Dendritic cell treated with granulocyte-macrophage colony-stimulating factor and Interleukin-4, amounts not matched to agents 40 ng/mL and 50 ng/mL, for 4 days (primary cell): ENCODE measurements at regions of chr21 and their contacts with region 1.

Region 1: GRCh38 chr21:17387030-17387617 is 125.7 kb upstream of the CXADR start:
- H3K4me3 Mint-ChIP-seq: no peak overlapping the region
- H3K27ac Mint-ChIP-seq: no peak overlapping the region
- H3K4me1 Mint-ChIP-seq: peaks cover 8% of the 10 kb centered on the region
- H3K27me3 Mint-ChIP-seq: peaks cover 3% of the 10 kb centered on the region

Region 2: GRCh38 chr21:17527240-17527639 is 140.1 kb after region 1 on chr21:
- intact Hi-C with region 1: no loop called
- H3K4me3 Mint-ChIP-seq: no peak overlapping the region
- H3K27ac Mint-ChIP-seq: no peak overlapping the region
- H3K4me1 Mint-ChIP-seq: no peaks in the 10 kb centered on the region
- H3K27me3 Mint-ChIP-seq: peaks cover 70% of the 10 kb centered on the region

Region 3: DNA sequence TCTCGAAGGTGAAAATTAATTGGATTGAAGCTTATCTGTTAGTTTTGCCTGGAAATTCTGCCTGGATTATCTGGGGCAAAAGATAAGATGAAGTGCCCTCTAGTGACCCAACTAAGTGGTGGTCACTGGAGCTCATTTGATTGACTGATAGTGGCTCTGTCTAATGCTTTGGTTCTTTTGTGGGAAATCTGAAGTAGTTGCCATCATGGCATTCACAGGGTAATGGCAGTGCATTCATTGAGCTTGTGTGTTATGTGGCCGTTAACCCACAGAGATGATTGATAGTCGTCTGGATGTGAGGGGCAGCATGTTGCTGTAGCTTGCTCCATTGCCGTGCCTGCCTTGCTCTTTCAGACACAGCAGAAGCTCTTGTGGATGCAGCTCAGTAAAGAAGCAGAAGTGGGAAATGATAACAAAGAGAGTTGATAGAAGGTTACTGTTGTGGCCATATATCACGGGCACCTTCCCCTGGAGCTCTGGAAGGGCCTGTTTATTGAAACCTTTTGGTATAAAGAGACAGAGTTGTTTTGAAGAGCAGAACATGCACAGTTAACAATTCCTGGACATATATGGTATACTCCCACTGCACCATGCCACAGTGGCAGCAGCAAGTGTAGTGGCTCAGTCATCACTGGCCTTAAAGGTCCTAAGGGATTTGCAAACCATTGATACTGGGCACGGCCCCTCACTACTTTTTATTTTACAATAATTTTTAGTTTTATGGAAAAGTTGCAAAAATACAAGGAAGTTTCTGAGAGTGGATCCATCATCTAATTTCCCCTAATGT is 167.7 kb after region 1 on chr21:
- intact Hi-C with region 1: loop called (anchors 10 kb)
- H3K4me3 Mint-ChIP-seq: no peak overlapping the region
- H3K27ac Mint-ChIP-seq: no peak overlapping the region
- H3K4me1 Mint-ChIP-seq: no peaks in the 10 kb centered on the region
- H3K27me3 Mint-ChIP-seq: peaks cover 52% of the 10 kb centered on the region

Region 4: DNA sequence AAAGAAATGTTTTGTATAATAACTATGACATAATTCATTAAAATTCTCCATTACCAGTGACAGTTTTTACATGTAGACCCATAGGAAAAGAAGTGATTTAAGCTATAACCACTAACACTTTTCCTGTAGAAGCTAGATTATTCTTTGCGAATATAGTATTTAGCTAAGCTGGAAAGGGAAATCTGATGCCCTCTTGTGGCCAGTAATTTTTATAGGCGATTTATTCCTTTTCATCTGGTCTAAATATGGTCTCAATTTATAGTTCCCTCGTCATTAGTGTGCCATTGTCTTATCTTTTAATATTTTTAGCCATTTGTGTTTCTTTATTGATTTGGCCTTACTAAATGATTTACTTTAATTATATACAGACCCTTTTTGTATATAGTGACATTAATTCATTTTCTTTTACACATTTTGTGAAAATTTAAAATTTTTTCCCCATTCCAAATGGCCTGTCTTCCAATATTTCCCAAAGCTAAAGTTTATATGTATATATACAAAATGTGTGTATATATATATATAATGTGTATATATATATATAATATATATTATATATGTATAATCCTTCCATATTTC is 198.8 kb after region 1 on chr21:
- intact Hi-C with region 1: loop called (anchors 1 kb)
- H3K4me3 Mint-ChIP-seq: no peak overlapping the region
- H3K27ac Mint-ChIP-seq: no peak overlapping the region
- H3K4me1 Mint-ChIP-seq: no peaks in the 10 kb centered on the region
- H3K27me3 Mint-ChIP-seq: peaks cover 1% of the 10 kb centered on the region

Region 5: DNA sequence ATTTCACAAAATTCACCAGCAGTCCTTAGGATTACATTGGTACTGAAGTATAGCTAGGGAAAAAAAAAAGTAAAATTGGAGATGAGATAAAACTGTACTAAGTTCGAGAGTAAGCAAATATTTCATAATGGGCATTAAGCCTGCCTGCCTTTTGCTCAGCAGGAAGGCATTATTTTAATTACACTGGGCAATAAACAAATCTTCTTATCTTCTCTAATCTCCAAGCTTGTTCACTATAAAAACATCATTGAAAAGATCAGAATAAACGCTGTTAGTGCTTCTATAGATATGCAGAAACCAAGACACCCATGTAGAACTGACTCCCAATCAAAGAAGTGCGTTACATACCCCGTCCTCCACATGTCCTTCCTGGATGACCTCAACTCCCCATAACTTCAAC is 683.3 kb after region 1 on chr21:
- intact Hi-C with region 1: no loop called
- H3K4me3 Mint-ChIP-seq: no peak overlapping the region
- H3K27ac Mint-ChIP-seq: no peak overlapping the region
- H3K4me1 Mint-ChIP-seq: no peaks in the 10 kb centered on the region
- H3K27me3 Mint-ChIP-seq: no peaks in the 10 kb centered on the region